ENCODE measurements at regions of chr5 and their contacts with region 1.

Region 1: DNA sequence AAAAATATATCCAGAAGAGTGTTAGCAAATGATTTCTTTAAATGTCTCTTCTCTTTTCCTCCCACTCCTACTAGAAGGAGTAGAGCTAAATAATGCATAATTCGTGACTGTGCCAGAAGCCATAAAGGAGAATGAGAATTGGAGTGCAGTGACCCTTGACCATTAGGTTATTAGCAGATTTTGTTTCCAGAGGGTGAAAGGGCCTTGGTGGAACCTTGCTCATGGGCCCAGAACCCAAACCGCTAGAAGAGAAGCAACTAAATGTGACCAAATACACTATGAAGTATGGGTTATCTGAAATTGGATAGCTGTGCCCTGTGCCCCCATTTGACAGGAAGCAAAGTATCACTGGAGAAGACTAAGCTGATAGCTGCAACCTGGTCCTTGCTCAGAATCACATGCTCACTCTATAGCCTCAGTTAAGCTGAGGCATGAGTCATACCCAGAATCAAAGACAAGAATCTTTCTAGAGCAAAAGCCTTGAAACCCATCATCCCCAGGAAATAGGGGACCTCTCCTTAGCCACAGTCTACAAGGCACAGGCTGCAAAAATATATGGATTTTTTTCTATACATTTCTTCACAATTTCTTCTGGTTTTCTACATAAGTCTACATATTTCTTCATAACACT is 36.3 kb downstream of the CAPSL start:
- DNase-seq: no peak
- ATAC-seq: peak; percentile 48
- H3K4me3 ChIP-seq: no peak overlapping the region
- H3K4me3 Mint-ChIP-seq: peak overlapping the region in 1 of 10 donors; percentile 57
- H3K27ac ChIP-seq: no peak overlapping the region
- H3K27ac Mint-ChIP-seq: peak overlapping the region in 2 of 9 donors; percentile 25 to 40
- H3K4me1 ChIP-seq: peaks cover 10 to 12% of the 10 kb centered on the region in 2 donors
- H3K4me1 Mint-ChIP-seq: peaks cover 28 to 76% (median 63%) of the 10 kb centered on the region in 7 donors
- H3K27me3 ChIP-seq: no peaks in the 10 kb centered on the region
- H3K27me3 Mint-ChIP-seq: no peaks in the 10 kb centered on the region

Region 2: DNA sequence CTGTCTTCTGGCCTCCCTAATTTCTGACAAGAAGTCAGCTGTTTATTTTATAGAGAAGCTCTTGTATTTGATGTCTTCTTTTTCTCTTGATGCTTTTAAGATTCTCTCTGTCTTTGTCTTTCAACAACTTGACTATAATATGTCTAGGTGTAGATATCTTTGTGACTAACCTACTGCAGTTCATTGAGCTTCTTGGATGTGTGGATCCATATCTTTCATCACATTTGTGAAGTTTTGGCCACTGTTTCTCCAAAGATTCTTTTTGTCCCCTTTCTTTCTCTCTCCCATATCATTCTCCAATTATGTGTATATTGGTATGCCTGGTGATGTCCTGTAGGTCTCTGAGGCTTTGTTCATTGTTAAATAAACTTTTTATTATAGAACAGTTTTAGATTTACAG is 267.8 kb before region 1 on chr5:
- CTCF ChIA-PET with region 1: no interaction called
- POLR2A ChIA-PET with region 1: no interaction called
- intact Hi-C with region 1: no loop called
- DNase-seq: no peak
- ATAC-seq: no peak
- H3K4me3 ChIP-seq: no peak overlapping the region
- H3K4me3 Mint-ChIP-seq: no peak overlapping the region
- H3K27ac ChIP-seq: no peak overlapping the region
- H3K27ac Mint-ChIP-seq: no peak overlapping the region
- H3K4me1 ChIP-seq: no peaks in the 10 kb centered on the region
- H3K4me1 Mint-ChIP-seq: no peaks in the 10 kb centered on the region
- H3K27me3 ChIP-seq: no peaks in the 10 kb centered on the region
- H3K27me3 Mint-ChIP-seq: no peaks in the 10 kb centered on the region

Region 3: GRCh38 chr5:35884115-35884788 is 17.9 kb before region 1 on chr5:
- CTCF ChIA-PET with region 1: interaction called, 3 read pairs
- POLR2A ChIA-PET with region 1: interaction called, 7 read pairs
- intact Hi-C with region 1: loop called (anchors 1 kb)
- DNase-seq: no peak
- ATAC-seq: peak; percentile 57
- H3K4me3 ChIP-seq: no peak overlapping the region
- H3K4me3 Mint-ChIP-seq: peak overlapping the region in 8 of 10 donors; percentile 2 to 62 (median 18)
- H3K27ac ChIP-seq: no peak overlapping the region
- H3K27ac Mint-ChIP-seq: peak overlapping the region in 8 of 9 donors; percentile 5 to 90 (median 68)
- H3K4me1 ChIP-seq: peaks cover 10 to 25% of the 10 kb centered on the region in 2 donors
- H3K4me1 Mint-ChIP-seq: peaks cover 37 to 56% (median 51%) of the 10 kb centered on the region in 7 donors
- H3K27me3 ChIP-seq: no peaks in the 10 kb centered on the region
- H3K27me3 Mint-ChIP-seq: no peaks in the 10 kb centered on the region

Region 4: GRCh38 chr5:35890021-35890696 is 12.0 kb before region 1 on chr5:
- CTCF ChIA-PET with region 1: no interaction called
- POLR2A ChIA-PET with region 1: interaction called, 4 read pairs
- intact Hi-C with region 1: loop called in 1 of 2 experiments (anchors 1 kb)
- DNase-seq: no peak
- ATAC-seq: no peak
- H3K4me3 ChIP-seq: no peak overlapping the region
- H3K4me3 Mint-ChIP-seq: no peak overlapping the region
- H3K27ac ChIP-seq: no peak overlapping the region
- H3K27ac Mint-ChIP-seq: no peak overlapping the region
- H3K4me1 ChIP-seq: no peaks in the 10 kb centered on the region
- H3K4me1 Mint-ChIP-seq: peaks cover 0 to 7% (median 0%) of the 10 kb centered on the region in 7 donors
- H3K27me3 ChIP-seq: no peaks in the 10 kb centered on the region
- H3K27me3 Mint-ChIP-seq: no peaks in the 10 kb centered on the region